Naive thymus-derived CD4-positive, alpha-beta T cell (primary cell): ENCODE measurements at regions of chr17 and their contacts with region 1.

Region 1: GRCh38 chr17:76714822-76715495 is 4.2 kb upstream of the MXRA7 start:
- DNase-seq: peak; percentile 60 to 83 (median 70)
- ATAC-seq: peak; percentile 18
- H3K4me3 ChIP-seq: no peak overlapping the region
- H3K4me3 Mint-ChIP-seq: peak overlapping the region in 5 of 10 donors; percentile 1 to 41 (median 2)
- H3K27ac ChIP-seq: peak overlapping the region; percentile 32
- H3K27ac Mint-ChIP-seq: peak overlapping the region; percentile 22 to 82 (median 75)
- H3K4me1 ChIP-seq: peaks cover 14 to 30% of the 10 kb centered on the region in 2 donors
- H3K4me1 Mint-ChIP-seq: peaks cover 27 to 48% (median 41%) of the 10 kb centered on the region in 7 donors
- H3K27me3 ChIP-seq: no peaks in the 10 kb centered on the region
- H3K27me3 Mint-ChIP-seq: peaks cover 0 to 2% (median 0%) of the 10 kb centered on the region in 5 donors

Region 2: DNA sequence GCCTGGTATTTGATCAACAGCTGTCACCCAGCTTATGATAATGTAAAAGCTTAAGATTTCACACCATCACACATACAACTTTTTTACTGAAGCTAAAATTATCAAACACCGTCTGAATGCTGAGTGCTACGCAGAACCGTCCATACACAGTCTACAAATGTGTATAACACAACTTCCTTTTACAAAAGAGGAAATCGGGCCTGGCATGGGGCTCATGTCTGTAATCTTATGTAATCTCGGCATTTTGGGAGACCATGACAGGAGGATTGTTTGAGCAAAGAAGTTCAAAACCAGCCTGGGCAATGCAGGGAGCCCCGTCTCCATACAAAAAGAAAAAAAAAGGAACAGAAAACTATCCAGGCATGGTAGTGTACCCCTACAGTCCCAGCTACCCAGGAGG is 387.3 kb before region 1 on chr17:
- CTCF ChIA-PET with region 1: no interaction called
- POLR2A ChIA-PET with region 1: no interaction called
- intact Hi-C with region 1: no loop called
- DNase-seq: no peak
- ATAC-seq: peak; percentile 76
- H3K4me3 ChIP-seq: no peak overlapping the region
- H3K4me3 Mint-ChIP-seq: no peak overlapping the region
- H3K27ac ChIP-seq: no peak overlapping the region
- H3K27ac Mint-ChIP-seq: no peak overlapping the region
- H3K4me1 ChIP-seq: no peaks in the 10 kb centered on the region
- H3K4me1 Mint-ChIP-seq: peaks cover 0 to 5% (median 0%) of the 10 kb centered on the region in 7 donors
- H3K27me3 ChIP-seq: no peaks in the 10 kb centered on the region
- H3K27me3 Mint-ChIP-seq: no peaks in the 10 kb centered on the region

Region 3: GRCh38 chr17:76547184-76547641 is 167.7 kb before region 1 on chr17:
- CTCF ChIA-PET with region 1: interaction called, 4 read pairs
- POLR2A ChIA-PET with region 1: no interaction called
- intact Hi-C with region 1: loop called in 1 of 2 experiments (anchors 2 kb)
- DNase-seq: peak in 8 of 9 donors; percentile 47 to 71 (median 64)
- ATAC-seq: peak; percentile 92
- H3K4me3 ChIP-seq: no peak overlapping the region
- H3K4me3 Mint-ChIP-seq: no peak overlapping the region
- H3K27ac ChIP-seq: no peak overlapping the region
- H3K27ac Mint-ChIP-seq: no peak overlapping the region
- H3K4me1 ChIP-seq: no peaks in the 10 kb centered on the region
- H3K4me1 Mint-ChIP-seq: peaks cover 0 to 14% (median 4%) of the 10 kb centered on the region in 7 donors
- H3K27me3 ChIP-seq: no peaks in the 10 kb centered on the region
- H3K27me3 Mint-ChIP-seq: peaks cover 3 to 18% (median 7%) of the 10 kb centered on the region in 5 donors

Region 4: GRCh38 chr17:76696763-76697701 is 17.9 kb before region 1 on chr17:
- CTCF ChIA-PET with region 1: no interaction called
- POLR2A ChIA-PET with region 1: no interaction called
- intact Hi-C with region 1: no loop called
- DNase-seq: no peak
- ATAC-seq: no peak
- H3K4me3 ChIP-seq: no peak overlapping the region
- H3K4me3 Mint-ChIP-seq: no peak overlapping the region
- H3K27ac ChIP-seq: no peak overlapping the region
- H3K27ac Mint-ChIP-seq: peak overlapping the region in 1 of 9 donors; percentile 38
- H3K4me1 ChIP-seq: no peaks in the 10 kb centered on the region
- H3K4me1 Mint-ChIP-seq: peaks cover 0 to 16% (median 0%) of the 10 kb centered on the region in 7 donors
- H3K27me3 ChIP-seq: no peaks in the 10 kb centered on the region
- H3K27me3 Mint-ChIP-seq: peaks cover 0 to 6% (median 0%) of the 10 kb centered on the region in 5 donors

Region 5: DNA sequence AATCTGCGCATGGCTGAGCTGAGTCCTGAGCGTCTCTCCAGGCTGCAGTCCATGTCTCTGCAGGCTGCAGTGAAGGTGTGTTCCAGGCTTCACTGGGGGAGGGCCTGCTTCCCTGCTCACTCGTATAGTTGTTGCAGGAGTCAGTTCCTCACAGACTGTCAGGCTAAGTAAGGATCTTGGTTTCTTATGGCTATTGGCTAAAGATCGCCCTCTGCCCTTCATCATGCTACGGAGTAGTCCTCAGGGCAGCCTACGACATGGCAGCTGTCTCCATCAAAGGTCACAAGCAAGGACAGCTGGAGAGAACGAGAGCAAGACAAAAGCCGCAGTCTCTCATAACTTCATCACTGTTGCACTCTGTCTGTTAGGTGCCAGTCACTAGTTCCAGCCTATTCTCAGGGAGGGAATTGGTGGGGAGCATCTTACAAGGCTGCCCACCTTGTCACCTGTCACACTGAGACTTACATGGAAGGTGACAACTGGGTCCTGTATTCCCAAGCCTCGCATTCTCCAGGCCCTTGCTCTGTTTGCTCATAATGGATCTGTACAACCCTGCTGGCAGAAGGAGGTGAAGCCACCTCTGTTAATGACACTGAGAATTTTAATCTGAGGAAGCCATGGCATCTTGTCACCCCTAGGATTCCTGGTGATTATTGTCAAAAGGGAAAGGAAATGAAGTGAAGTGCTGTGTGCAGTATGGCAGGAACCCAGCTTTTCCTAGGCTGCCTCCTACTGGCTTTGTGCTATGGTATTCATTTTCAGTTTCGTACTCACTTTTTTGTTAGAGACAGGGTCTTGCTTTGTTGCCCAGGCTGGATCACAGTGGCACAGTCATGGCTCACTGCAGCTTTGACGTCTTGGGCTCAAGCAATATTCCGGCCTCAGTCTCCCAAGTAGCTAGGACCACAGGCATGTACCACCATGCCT is 66.4 kb after region 1 on chr17:
- CTCF ChIA-PET with region 1: interaction called, 11 read pairs
- POLR2A ChIA-PET with region 1: no interaction called
- intact Hi-C with region 1: loop called in 1 of 2 experiments (anchors 1 kb)
- DNase-seq: peak in 5 of 9 donors; percentile 9 to 34 (median 16)
- ATAC-seq: peak; percentile 44
- H3K4me3 ChIP-seq: no peak overlapping the region
- H3K4me3 Mint-ChIP-seq: no peak overlapping the region
- H3K27ac ChIP-seq: no peak overlapping the region
- H3K27ac Mint-ChIP-seq: peak overlapping the region in 2 of 9 donors; percentile 47 to 64
- H3K4me1 ChIP-seq: no peaks in the 10 kb centered on the region
- H3K4me1 Mint-ChIP-seq: peaks cover 0 to 6% (median 0%) of the 10 kb centered on the region in 7 donors
- H3K27me3 ChIP-seq: no peaks in the 10 kb centered on the region
- H3K27me3 Mint-ChIP-seq: no peaks in the 10 kb centered on the region

Region 6: DNA sequence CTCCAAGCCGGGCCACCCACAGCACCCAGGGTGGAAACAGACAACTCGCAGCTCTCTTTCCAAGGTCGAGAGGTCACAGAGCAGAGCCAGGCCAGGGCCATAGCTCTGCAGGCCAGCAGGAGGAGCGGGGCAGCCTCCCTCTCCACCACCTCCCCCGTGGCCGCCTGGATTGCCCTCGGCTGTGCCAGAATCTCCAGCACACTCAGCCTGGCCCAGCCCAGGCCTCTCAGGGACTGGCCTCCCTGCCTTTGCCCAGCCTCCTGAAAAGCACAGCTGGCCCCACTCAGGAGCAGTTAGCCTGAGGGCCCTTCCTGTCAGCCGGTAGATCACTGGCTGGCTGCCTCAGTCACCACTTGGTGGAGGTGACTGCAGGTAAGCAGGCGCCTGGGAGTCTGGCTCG is 340.0 kb after region 1 on chr17:
- CTCF ChIA-PET with region 1: interaction called, 3 read pairs
- POLR2A ChIA-PET with region 1: no interaction called
- intact Hi-C with region 1: loop called in 1 of 2 experiments (anchors 2 kb)
- DNase-seq: no peak
- ATAC-seq: no peak
- H3K4me3 ChIP-seq: no peak overlapping the region
- H3K4me3 Mint-ChIP-seq: no peak overlapping the region
- H3K27ac ChIP-seq: no peak overlapping the region
- H3K27ac Mint-ChIP-seq: no peak overlapping the region
- H3K4me1 ChIP-seq: no peaks in the 10 kb centered on the region
- H3K4me1 Mint-ChIP-seq: peaks cover 0 to 5% (median 0%) of the 10 kb centered on the region in 7 donors
- H3K27me3 ChIP-seq: peaks cover 0 to 5% of the 10 kb centered on the region in 2 donors
- H3K27me3 Mint-ChIP-seq: peaks cover 4 to 21% (median 10%) of the 10 kb centered on the region in 5 donors